GM12878 (cell line): ENCODE measurements at regions of chr6 and their contacts with region 1.

Region 1: GRCh38 chr6:45156075-45156474 is 172.1 kb upstream of the RUNX2 start:
- DNase-seq: peak; percentile 76
- ATAC-seq: peak; percentile 99
- H3K4me3 ChIP-seq: no peak overlapping the region
- H3K27ac ChIP-seq: no peak overlapping the region
- H3K4me1 ChIP-seq: no peaks in the 10 kb centered on the region
- H3K27me3 ChIP-seq: no peaks in the 10 kb centered on the region
- CTCF ChIP-seq: no peak
- EP300 ChIP-seq: peak; percentile 57 to 76; a peak in 3 of 4 replicates
- POLR2A ChIP-seq: no peak
- RAD21 ChIP-seq: no peak

Region 2: DNA sequence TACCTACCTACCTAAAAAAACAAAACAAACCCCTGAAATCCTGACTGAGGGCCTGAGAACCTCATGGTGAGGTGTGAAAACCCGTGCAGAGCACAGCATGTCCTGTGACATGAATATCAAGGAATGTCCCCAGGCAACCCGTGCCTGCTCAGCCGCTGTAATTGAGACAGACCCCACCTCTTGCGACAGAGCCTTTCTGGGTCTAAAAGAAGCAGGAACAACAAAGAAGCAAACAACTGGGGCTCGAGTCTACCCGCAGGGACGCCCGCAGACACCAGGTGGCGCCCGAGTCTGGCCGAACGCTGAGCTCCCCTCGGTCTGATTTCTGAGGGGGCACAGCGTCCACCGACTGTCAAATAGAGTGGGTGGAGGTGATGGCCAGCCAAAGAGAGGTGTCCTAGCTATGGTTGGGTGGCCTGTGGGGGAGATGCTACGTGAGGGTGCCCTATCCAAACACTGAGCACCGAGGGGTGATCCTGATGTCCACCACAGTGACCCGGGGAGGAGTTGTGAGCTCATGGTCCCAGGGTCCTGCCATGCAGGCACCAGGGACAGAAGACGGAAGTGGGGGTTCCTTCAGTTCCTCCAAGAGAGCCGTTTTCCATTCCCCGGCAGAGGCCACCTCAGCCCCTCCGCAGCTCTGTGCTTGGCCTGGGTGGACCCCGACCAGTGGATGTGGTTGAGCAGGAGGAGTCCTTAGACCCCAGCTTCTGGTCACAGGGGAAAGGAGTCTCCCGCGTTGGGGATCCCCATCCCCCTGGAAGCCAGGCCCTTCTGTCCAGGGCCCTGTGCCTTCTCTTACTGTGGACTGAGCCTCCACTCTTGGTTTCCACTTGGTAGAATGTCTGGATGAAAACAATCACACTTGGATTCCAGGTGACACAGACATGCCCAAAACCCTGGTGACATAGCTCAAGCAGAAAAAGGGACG is 500.4 kb before region 1 on chr6:
- CTCF ChIA-PET with region 1: no interaction called
- POLR2A ChIA-PET with region 1: no interaction called
- RAD21 ChIA-PET with region 1: no interaction called
- SMC1A ChIA-PET with region 1: no interaction called
- in situ Hi-C with region 1: no loop called
- intact Hi-C with region 1: no loop called
- DNase-seq: no peak
- ATAC-seq: peak; percentile 90
- H3K4me3 ChIP-seq: no peak overlapping the region
- H3K27ac ChIP-seq: no peak overlapping the region
- H3K4me1 ChIP-seq: no peaks in the 10 kb centered on the region; the same call in 1 of the 2 replicates
- H3K27me3 ChIP-seq: peaks cover 0 to 2% of the 10 kb centered on the region in 2 experiments; a peak in 1 of 4 replicates
- CTCF ChIP-seq: peak; percentile 90 to 92 (median 90)
- EP300 ChIP-seq: no peak
- POLR2A ChIP-seq: no peak
- RAD21 ChIP-seq: peak; percentile 92

Region 3: DNA sequence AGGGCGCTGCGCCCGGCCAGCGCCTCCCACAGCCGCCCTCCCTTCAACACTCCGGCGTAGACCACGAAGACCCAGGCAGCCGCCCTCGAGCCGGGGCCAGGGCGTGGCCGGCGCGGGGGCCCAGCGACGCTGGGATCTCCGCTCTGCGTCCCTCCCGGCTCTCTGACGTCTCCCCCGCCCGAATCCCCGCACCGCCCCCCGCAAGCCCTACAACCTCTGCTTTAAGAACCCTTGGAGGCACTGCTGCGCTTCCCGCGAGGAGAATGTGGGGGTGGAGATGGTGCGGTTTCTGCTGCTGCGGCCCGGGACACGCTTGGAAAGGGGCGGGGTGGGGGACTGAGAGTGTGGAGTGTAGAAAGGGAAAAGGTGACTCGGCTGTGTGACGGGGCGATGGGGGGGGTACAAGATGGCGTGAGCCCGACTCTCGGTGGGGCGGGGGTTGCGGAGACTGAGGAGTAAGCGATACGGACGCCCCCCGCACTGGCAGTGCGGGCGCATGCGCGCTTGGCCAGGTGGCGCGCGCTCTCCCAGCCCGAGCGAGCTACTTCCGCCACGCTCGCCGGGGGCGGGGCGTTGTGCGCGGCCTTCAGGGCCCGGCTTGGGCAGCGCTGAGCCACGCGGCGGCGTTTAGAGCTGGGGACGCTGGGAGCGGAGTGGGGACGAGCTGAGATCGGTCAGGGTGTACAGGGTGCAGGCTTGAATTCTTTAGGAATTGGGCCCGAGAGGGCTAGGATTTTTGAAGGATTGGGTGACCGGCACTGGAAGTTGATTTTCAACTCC is 221.7 kb after region 1 on chr6 and contains the start of gene SUPT3H:
- CTCF ChIA-PET with region 1: no interaction called
- POLR2A ChIA-PET with region 1: no interaction called
- RAD21 ChIA-PET with region 1: no interaction called
- SMC1A ChIA-PET with region 1: no interaction called
- in situ Hi-C with region 1: no loop called
- intact Hi-C with region 1: loop called (anchors 10 kb)
- DNase-seq: peak; percentile 56
- ATAC-seq: peak; percentile 95
- H3K4me3 ChIP-seq: peak within 1 kb of the TSS; percentile 69
- H3K27ac ChIP-seq: peak within 1 kb of the TSS; percentile 80
- H3K4me1 ChIP-seq: no peaks in the 10 kb centered on the region; the same call in 1 of the 2 replicates
- H3K27me3 ChIP-seq: peaks cover 0 to 2% of the 10 kb centered on the region in 2 experiments; a peak in 1 of 4 replicates
- CTCF ChIP-seq: peak in 1 of 3 experiments; percentile 27; a peak in 1 of 6 replicates
- EP300 ChIP-seq: 0 out of 4 replicates have a peak, but pooled peaks of 1 of the 2 experiments have one; percentile 7
- POLR2A ChIP-seq: peak; percentile 79
- RAD21 ChIP-seq: no peak
- polyA plus RNA-seq, gene SUPT3H: 2.8 TPM